Naive thymus-derived CD8-positive, alpha-beta T cell (primary cell): ENCODE measurements at regions of chr13 and their contacts with region 1.

Region 1: DNA sequence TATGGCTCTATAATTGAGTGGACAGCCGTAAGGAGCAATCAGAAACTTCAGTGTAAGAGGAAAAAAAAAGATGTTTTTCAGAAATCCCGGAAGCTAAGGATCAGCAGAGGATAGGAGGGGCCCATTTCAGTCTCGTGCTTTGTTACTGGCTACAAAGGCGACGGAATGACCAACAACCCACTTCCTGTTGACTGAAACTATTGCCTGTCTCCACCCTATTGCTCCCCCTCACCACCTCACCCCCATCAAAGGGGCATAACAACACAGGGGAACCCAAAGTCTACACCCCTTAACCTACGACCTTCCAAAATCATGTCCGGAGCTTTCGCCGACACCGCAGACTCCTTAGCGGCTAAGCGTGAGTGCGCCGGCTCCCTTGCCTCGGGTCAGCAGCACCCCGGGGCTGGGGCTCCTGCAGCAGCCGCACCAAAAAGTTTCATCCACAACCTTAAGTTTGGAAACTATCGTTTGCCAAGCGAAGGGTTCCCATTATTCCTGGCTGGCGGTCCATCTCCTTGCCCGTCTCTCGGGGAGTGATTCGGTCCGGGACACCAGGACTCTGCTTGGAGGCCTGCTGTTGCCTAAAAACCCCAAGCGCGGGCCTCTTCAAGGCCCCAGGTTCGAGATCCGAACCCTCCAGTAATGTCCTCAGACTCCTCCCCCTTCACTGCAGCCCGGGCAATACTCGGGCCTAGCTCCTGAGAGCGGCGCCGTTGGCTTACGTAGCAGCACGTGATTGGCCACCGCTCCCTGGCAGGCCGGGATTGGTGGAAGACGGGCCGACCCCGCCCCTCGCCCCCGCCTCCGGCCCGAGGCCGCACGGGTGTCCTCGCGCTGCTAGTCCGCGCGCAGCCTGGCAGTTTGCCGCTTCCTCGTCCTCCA is at the start of gene TPP2:
- DNase-seq: peak; percentile 94 to 99 (median 97)
- ATAC-seq: peak; percentile 84 to 85
- H3K4me3 Mint-ChIP-seq: peak within 1 kb of the TSS; percentile 94 to 99 (median 97)
- H3K27ac Mint-ChIP-seq: peak within 1 kb of the TSS; percentile 93 to 100 (median 100)
- H3K4me1 Mint-ChIP-seq: peaks cover 40 to 72% (median 58%) of the 10 kb centered on the region in 4 donors
- H3K27me3 Mint-ChIP-seq: no peaks in the 10 kb centered on the region
- polyA plus RNA-seq, gene TPP2: 52.3 to 64.7 (median 61.1) TPM

Region 2: DNA sequence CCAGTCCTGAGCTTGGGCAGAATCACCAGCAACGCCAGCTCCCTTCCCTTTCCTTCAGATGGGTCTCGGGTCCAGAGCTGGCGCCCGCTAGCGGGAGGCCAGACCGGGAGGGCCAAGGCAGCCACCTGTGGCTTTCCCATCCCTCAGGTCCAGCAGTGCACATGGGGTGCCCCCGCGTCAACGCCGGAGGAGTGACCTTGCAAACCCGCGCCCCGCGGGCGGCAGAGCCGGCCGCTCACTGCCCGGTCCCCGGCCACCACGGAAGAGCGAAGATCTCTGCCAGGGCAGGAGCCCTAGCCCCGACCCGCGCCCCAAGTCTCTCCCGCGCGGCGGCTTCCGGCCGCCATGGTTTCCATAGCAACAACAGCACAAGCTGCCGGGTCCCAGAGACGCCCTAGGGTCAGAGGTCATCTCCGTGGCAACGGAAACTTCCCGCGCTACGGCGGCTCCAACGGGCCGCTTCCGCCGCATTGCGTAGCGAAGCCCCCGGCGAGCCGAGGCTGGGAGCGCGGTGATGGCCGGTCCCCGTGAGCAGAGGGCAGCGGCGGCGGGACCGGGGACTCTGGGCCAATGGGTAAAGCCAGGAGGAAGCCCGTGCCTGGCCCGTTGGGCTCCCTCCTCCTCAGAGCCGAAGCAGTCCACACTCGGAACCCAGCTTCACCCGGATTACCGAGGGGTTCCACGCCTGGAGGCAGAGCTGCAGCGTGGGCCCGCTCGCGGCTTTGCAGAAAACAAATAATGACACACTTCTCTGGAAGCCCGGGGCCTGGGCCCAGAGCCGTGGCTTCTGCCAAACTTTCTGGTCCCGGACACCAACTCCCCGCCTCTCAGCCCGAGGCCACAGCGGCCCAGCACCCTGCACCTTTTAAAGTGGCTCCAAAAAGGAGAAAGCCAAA is 202.0 kb before region 1 on chr13:
- POLR2A ChIA-PET with region 1: interaction called, 13 read pairs
- DNase-seq: peak; percentile 90 to 99 (median 96)
- ATAC-seq: peak; percentile 90 to 92
- H3K4me3 Mint-ChIP-seq: peak overlapping the region; percentile 84 to 94 (median 90)
- H3K27ac Mint-ChIP-seq: peak overlapping the region; percentile 47 to 94 (median 91)
- H3K4me1 Mint-ChIP-seq: peaks cover 7 to 19% (median 15%) of the 10 kb centered on the region in 4 donors
- H3K27me3 Mint-ChIP-seq: peaks cover 7 to 26% (median 13%) of the 10 kb centered on the region in 5 donors

Region 3: GRCh38 chr13:102504002-102504401 is 92.4 kb before region 1 on chr13:
- POLR2A ChIA-PET with region 1: no interaction called
- DNase-seq: no peak
- ATAC-seq: no peak
- H3K4me3 Mint-ChIP-seq: no peak overlapping the region
- H3K27ac Mint-ChIP-seq: no peak overlapping the region
- H3K4me1 Mint-ChIP-seq: no peaks in the 10 kb centered on the region
- H3K27me3 Mint-ChIP-seq: peaks cover 8 to 23% (median 16%) of the 10 kb centered on the region in 5 donors

Region 4: DNA sequence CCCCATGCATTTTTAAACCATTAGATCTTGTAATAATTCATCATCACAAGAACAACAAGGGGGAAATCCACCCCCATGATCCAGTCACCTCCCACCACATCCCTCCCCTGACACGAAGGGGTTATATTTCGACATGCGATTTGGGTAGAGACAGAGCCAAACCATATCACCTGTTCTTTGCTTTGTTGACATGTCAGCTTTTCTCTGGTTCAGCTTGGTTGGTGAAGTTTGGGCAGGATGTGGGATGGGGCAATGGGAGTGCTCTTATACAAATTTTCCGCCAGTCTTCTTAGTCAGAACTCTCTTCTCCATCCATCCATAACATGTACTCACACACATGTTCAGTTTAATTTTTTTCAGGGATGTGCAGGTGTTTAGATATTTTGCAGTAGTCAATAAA is 13.3 kb after region 1 on chr13:
- POLR2A ChIA-PET with region 1: interaction called, 93 read pairs
- DNase-seq: peak in 4 of 10 donors; percentile 14 to 52 (median 34)
- ATAC-seq: peak; percentile 68 to 83
- H3K4me3 Mint-ChIP-seq: peak overlapping the region in 7 of 10 donors; percentile 22 to 57 (median 45)
- H3K27ac Mint-ChIP-seq: peak overlapping the region; percentile 2 to 91 (median 69)
- H3K4me1 Mint-ChIP-seq: peaks cover 29 to 79% (median 74%) of the 10 kb centered on the region in 4 donors
- H3K27me3 Mint-ChIP-seq: no peaks in the 10 kb centered on the region

Region 5: DNA sequence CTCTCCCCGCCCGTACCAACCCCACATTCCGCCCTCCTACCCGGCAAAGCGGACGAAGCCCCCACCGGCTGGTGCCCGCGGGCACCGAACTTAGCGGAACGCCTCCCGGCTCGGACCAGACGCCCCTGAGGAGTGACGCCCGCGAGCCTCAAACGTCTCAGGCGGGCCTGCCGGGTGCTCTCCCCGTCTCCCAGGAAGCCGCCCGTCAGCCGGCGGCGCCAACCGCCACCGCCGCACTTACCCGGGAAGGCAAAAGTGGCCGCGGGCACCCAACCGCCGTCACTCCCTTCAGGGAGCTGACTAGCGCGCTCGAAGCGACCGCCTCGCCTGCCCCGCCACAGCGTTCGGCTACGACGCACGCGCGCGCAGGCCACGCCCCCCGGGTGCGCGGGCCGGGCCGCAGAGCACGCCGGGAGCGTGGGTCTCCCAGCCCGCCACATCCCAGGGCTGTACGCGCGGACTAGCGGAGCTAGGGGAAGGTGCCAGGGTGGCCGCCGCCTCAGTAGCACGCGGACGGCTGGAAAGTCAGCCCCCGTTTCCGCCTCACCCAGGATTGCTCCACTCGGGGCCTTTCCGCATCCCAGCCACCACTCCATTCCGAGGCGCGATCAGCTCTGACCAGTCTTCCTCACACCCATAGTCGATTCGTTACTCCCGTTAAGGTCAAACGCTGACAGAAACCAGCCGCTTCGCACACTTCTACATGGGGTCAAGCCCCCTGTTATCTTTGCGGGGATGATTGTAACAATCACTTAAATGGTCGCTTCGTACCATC is 177.2 kb after region 1 on chr13 and contains the start of gene TEX30:
- POLR2A ChIA-PET with region 1: interaction called, 33 read pairs
- DNase-seq: peak; percentile 80 to 90 (median 88)
- ATAC-seq: peak; percentile 94 to 95
- H3K4me3 Mint-ChIP-seq: peak within 1 kb of the TSS; percentile 84 to 96 (median 92)
- H3K27ac Mint-ChIP-seq: peak within 1 kb of the TSS; percentile 90 to 97 (median 92)
- H3K4me1 Mint-ChIP-seq: peaks cover 9 to 49% (median 39%) of the 10 kb centered on the region in 4 donors
- H3K27me3 Mint-ChIP-seq: no peaks in the 10 kb centered on the region
- polyA plus RNA-seq, gene TEX30: 23.8 to 25.0 (median 24.3) TPM

Region 6: DNA sequence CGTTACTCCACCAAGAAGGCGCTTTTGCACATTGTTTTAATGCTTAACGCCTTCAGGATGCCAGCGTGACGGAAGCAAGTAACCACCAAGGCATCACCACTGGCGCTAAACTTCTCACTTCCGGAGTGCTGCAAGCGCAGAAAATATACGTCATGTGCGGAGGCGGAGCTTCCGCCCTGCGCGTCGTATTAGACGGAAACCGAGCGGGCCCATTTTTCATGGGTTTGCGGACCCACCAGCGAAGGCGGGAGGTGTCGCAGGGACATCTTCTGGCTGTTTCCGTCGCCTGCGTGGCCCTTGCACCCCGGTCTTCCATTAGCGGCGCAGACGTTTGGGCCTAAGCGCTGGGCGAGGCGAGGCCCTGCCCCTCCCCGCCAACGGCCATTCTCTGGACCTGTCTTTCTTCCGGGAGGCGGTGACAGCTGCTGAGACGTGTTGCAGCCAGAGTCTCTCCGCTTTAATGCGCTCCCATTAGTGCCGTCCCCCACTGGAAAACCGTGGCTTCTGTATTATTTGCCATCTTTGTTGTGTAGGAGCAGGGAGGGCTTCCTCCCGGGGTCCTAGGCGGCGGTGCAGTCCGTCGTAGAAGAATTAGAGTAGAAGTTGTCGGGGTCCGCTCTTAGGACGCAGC is 249.4 kb after region 1 on chr13 and contains the start of gene ERCC5:
- POLR2A ChIA-PET with region 1: interaction called, 302 read pairs
- DNase-seq: peak; percentile 84 to 99 (median 96)
- ATAC-seq: peak; percentile 77
- H3K4me3 Mint-ChIP-seq: peak within 1 kb of the TSS; percentile 87 to 99 (median 96)
- H3K27ac Mint-ChIP-seq: peak within 1 kb of the TSS; percentile 90 to 100 (median 99)
- H3K4me1 Mint-ChIP-seq: peaks cover 18 to 49% (median 45%) of the 10 kb centered on the region in 4 donors
- H3K27me3 Mint-ChIP-seq: peaks cover 0 to 3% (median 0%) of the 10 kb centered on the region in 5 donors
- polyA plus RNA-seq, gene ERCC5: 42.2 to 56.9 (median 53.1) TPM